IMR-90 (cell line): ENCODE measurements at regions of chr12 and their contacts with region 1.

Region 1: GRCh38 chr12:84117190-84117589 is 795.4 kb downstream of the SLC6A15 start:
- DNase-seq: no peak
- ATAC-seq: no peak
- H3K4me3 ChIP-seq: no peak overlapping the region
- H3K27ac ChIP-seq: no peak overlapping the region
- H3K4me1 ChIP-seq: no peaks in the 10 kb centered on the region
- H3K27me3 ChIP-seq: no peaks in the 10 kb centered on the region
- CTCF ChIP-seq: no peak
- POLR2A ChIP-seq: no peak
- RAD21 ChIP-seq: no peak

Region 2: GRCh38 chr12:83434600-83434999 is 682.6 kb before region 1 on chr12:
- CTCF ChIA-PET with region 1: no interaction called
- POLR2A ChIA-PET with region 1: no interaction called
- dilution Hi-C with region 1: no loop called
- in situ Hi-C with region 1: no loop called
- intact Hi-C with region 1: no loop called
- DNase-seq: no peak
- ATAC-seq: no peak
- H3K4me3 ChIP-seq: no peak overlapping the region
- H3K27ac ChIP-seq: no peak overlapping the region
- H3K4me1 ChIP-seq: no peaks in the 10 kb centered on the region
- H3K27me3 ChIP-seq: no peaks in the 10 kb centered on the region
- CTCF ChIP-seq: no peak
- POLR2A ChIP-seq: no peak
- RAD21 ChIP-seq: no peak

Region 3: DNA sequence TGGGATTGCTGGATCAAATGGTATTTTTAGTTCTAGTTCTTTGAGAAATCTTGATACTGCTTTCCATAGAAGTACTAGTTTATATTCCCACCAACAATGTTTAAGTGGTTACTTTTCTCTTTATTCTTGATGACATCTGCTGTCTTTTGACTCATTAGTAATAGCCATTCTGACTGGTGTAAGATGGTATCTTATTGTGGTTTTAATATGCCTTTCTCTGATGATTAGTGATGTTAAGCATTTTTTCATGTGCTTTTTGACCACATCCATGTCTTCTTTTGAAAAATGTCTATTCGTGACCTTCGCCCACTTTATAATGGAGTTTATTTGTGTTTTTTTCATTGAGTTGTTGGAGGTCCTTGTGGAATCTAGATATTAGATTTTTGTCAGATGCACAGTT is 70.3 kb before region 1 on chr12:
- CTCF ChIA-PET with region 1: no interaction called
- POLR2A ChIA-PET with region 1: no interaction called
- dilution Hi-C with region 1: no loop called
- in situ Hi-C with region 1: no loop called
- intact Hi-C with region 1: no loop called
- DNase-seq: no peak
- ATAC-seq: no peak
- H3K4me3 ChIP-seq: no peak overlapping the region
- H3K27ac ChIP-seq: no peak overlapping the region
- H3K4me1 ChIP-seq: no peaks in the 10 kb centered on the region
- H3K27me3 ChIP-seq: no peaks in the 10 kb centered on the region
- CTCF ChIP-seq: no peak
- POLR2A ChIP-seq: no peak
- RAD21 ChIP-seq: no peak

Region 4: DNA sequence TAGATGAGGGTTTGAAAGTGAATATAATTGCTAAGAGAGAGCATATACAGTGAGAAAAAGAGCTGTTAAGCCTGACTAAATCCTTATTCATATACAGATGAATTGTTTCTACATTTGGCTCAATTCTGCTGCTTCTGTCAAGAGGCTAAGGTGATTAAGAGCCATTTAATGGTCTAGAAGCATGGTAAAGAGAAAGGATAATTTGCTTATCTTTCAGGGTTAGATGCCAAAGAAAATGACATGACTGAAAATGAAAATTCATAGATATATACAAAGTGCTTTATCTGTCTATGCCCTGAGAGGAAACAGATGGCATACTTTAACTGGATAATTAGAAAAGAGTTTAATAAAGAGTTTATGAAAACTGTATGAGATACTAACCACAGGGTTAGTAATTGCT is 39.5 kb before region 1 on chr12:
- CTCF ChIA-PET with region 1: no interaction called
- POLR2A ChIA-PET with region 1: no interaction called
- dilution Hi-C with region 1: no loop called
- in situ Hi-C with region 1: no loop called
- intact Hi-C with region 1: loop called (anchors 5 kb)
- DNase-seq: peak; percentile 12
- ATAC-seq: peak; percentile 42; the same call in 1 of the 2 replicates
- H3K4me3 ChIP-seq: no peak overlapping the region
- H3K27ac ChIP-seq: no peak overlapping the region
- H3K4me1 ChIP-seq: no peaks in the 10 kb centered on the region; the same call in 1 of the 2 replicates
- H3K27me3 ChIP-seq: no peaks in the 10 kb centered on the region
- CTCF ChIP-seq: no peak
- POLR2A ChIP-seq: no peak
- RAD21 ChIP-seq: no peak

Region 5: DNA sequence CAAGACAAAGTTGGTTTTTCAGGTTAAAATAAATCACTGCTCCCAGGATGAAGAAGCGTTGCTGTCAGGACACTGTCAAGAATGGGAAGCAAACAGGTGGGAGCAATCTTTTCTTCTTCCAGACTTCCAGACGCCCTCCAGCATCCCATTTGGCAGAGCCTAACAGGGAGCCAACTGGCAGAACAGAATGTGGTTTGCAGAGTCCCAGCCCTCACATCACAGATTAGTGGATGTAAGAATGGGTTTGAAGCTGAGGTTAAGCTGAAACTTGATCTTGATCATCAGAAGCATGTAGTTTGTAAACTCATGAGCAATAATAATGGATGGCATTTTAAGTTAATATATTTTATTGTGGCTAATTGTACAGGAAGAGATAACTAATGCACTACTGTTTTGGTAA is 159.0 kb after region 1 on chr12:
- CTCF ChIA-PET with region 1: no interaction called
- POLR2A ChIA-PET with region 1: no interaction called
- dilution Hi-C with region 1: no loop called
- in situ Hi-C with region 1: no loop called
- intact Hi-C with region 1: no loop called
- DNase-seq: peak; percentile 0
- ATAC-seq: no peak
- H3K4me3 ChIP-seq: no peak overlapping the region
- H3K27ac ChIP-seq: no peak overlapping the region
- H3K4me1 ChIP-seq: peaks cover 2% of the 10 kb centered on the region; the same call in 1 of the 2 replicates
- H3K27me3 ChIP-seq: no peaks in the 10 kb centered on the region
- CTCF ChIP-seq: no peak
- POLR2A ChIP-seq: no peak
- RAD21 ChIP-seq: no peak